CD14-positive monocyte (primary cell): ENCODE measurements at regions of chr1 and their contacts with region 1.

Region 1: DNA sequence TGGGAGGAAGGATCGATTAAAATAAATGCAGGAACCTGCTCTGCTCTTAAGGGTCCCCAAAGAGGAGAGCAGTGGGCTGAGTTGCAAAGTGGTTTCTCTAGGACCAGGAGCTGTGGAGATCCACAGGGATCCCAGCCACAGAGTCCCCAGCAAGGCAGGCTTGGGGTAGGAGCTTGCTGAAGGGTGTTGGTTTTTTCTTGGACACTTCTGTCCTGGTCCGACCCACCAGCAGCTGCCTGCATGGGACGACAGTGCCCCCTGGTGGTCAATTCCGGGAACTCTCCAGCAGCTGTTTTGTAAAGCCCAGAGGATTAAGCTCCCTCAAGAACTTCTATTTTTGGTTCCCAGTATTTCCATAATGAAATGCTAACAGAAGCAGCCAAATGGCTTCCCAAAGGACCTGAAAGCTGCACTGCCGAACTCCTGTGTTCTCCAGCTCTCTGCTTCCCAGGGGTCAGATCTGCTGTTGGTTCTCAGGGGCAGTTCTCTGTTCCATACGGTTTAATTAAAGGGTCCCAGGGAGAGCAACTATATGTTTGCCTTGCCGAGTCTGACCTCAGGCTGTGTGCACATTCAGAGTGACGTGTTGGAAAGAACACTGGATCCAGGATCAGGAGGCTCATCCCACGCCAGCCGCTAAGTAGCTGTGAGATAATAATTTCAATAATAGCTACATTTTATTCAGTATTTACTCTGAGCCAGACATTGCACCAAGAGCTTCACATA is 23.2 kb downstream of the NENF start:
- DNase-seq: peak; percentile 70 to 76 (median 74)
- H3K4me3 ChIP-seq: no peak overlapping the region
- H3K4me3 Mint-ChIP-seq: no peak overlapping the region
- H3K27ac ChIP-seq: no peak overlapping the region
- H3K27ac Mint-ChIP-seq: no peak overlapping the region
- H3K4me1 ChIP-seq: no peaks in the 10 kb centered on the region
- H3K4me1 Mint-ChIP-seq: peaks cover 13% of the 10 kb centered on the region
- H3K27me3 ChIP-seq: no peaks in the 10 kb centered on the region
- H3K27me3 Mint-ChIP-seq: peaks cover 3 to 6% (median 4%) of the 10 kb centered on the region in 3 donors
- CTCF ChIP-seq: peak; percentile 95

Region 2: GRCh38 chr1:212070720-212071302 is 385.2 kb before region 1 on chr1:
- intact Hi-C with region 1: loop called (anchors 5 kb)
- DNase-seq: peak in 2 of 3 donors; percentile 33 to 38
- H3K4me3 ChIP-seq: no peak overlapping the region
- H3K4me3 Mint-ChIP-seq: no peak overlapping the region
- H3K27ac ChIP-seq: no peak overlapping the region
- H3K27ac Mint-ChIP-seq: no peak overlapping the region
- H3K4me1 ChIP-seq: no peaks in the 10 kb centered on the region
- H3K4me1 Mint-ChIP-seq: no peaks in the 10 kb centered on the region
- H3K27me3 ChIP-seq: no peaks in the 10 kb centered on the region
- H3K27me3 Mint-ChIP-seq: no peaks in the 10 kb centered on the region
- CTCF ChIP-seq: peak; percentile 75

Region 3: GRCh38 chr1:212368073-212368484 is 87.9 kb before region 1 on chr1:
- intact Hi-C with region 1: loop called in 1 of 2 experiments (anchors 5 kb)
- DNase-seq: peak; percentile 49 to 69 (median 57)
- H3K4me3 ChIP-seq: no peak overlapping the region
- H3K4me3 Mint-ChIP-seq: no peak overlapping the region
- H3K27ac ChIP-seq: peak overlapping the region in 1 of 2 donors; percentile 60
- H3K27ac Mint-ChIP-seq: peak overlapping the region in 1 of 7 donors; percentile 33
- H3K4me1 ChIP-seq: no peaks in the 10 kb centered on the region
- H3K4me1 Mint-ChIP-seq: no peaks in the 10 kb centered on the region
- H3K27me3 ChIP-seq: no peaks in the 10 kb centered on the region
- H3K27me3 Mint-ChIP-seq: no peaks in the 10 kb centered on the region
- CTCF ChIP-seq: peak; percentile 83

Region 4: GRCh38 chr1:212381397-212382035 is 74.5 kb before region 1 on chr1:
- intact Hi-C with region 1: no loop called
- DNase-seq: no peak
- H3K4me3 ChIP-seq: no peak overlapping the region
- H3K4me3 Mint-ChIP-seq: no peak overlapping the region
- H3K27ac ChIP-seq: no peak overlapping the region
- H3K27ac Mint-ChIP-seq: peak overlapping the region in 3 of 7 donors; percentile 61 to 89 (median 83)
- H3K4me1 ChIP-seq: no peaks in the 10 kb centered on the region
- H3K4me1 Mint-ChIP-seq: peaks cover 12% of the 10 kb centered on the region
- H3K27me3 ChIP-seq: no peaks in the 10 kb centered on the region
- H3K27me3 Mint-ChIP-seq: no peaks in the 10 kb centered on the region
- CTCF ChIP-seq: no peak

Region 5: GRCh38 chr1:212414328-212415106 is 41.4 kb before region 1 on chr1 and contains the start of gene PACC1:
- intact Hi-C with region 1: no loop called
- DNase-seq: peak; percentile 97 to 99 (median 98)
- H3K4me3 ChIP-seq: peak within 1 kb of the TSS; percentile 75 to 83 (median 79)
- H3K4me3 Mint-ChIP-seq: peak within 1 kb of the TSS; percentile 91 to 99
- H3K27ac ChIP-seq: peak within 1 kb of the TSS; percentile 54 to 82
- H3K27ac Mint-ChIP-seq: peak within 1 kb of the TSS; percentile 82 to 95 (median 92)
- H3K4me1 ChIP-seq: peaks cover 50 to 54% of the 10 kb centered on the region in 2 donors
- H3K4me1 Mint-ChIP-seq: peaks cover 58% of the 10 kb centered on the region
- H3K27me3 ChIP-seq: no peaks in the 10 kb centered on the region
- H3K27me3 Mint-ChIP-seq: peaks cover 0 to 2% (median 0%) of the 10 kb centered on the region in 3 donors
- CTCF ChIP-seq: no peak
- polyA plus RNA-seq, gene PACC1: 14.0 to 16.6 (median 14.7) TPM

Region 6: DNA sequence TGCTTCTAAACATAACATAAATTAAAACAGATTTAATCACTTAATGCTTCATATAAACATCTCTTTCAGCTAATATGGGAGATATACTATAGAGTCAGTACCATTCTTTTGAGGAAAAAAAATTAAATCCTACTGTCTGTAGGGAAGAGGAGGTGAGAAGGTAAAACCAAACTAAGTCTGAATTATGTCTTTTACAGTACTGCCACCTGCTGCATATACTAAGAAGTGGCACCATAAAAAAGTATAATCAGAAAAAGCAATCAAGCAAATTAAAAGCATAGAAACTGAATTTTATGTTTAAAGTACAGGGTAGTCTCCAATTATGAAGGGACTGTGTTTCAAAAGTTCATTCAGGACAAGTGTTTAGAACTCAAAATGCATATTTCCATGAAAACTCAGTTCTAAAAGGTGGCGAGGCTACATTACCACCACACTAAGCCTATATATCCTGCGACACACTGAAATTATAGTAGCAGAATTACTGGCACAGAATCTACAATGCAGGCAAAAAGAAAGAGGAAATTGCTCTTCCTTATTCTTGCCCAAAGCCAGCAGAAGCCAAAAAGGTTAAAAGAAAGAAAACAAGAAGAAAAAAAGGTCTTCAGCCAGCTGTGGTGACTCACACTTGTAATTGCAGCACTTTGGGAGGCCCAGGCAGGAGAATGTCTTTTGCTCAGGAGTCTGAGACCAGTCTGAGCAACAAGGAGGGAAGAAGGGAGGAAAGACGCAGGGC is 326.6 kb after region 1 on chr1:
- intact Hi-C with region 1: loop called (anchors 5 to 10 kb)
- DNase-seq: peak; percentile 40 to 86 (median 64)
- H3K4me3 ChIP-seq: no peak overlapping the region
- H3K4me3 Mint-ChIP-seq: no peak overlapping the region
- H3K27ac ChIP-seq: peak overlapping the region; percentile 33 to 59
- H3K27ac Mint-ChIP-seq: peak overlapping the region; percentile 68 to 92 (median 87)
- H3K4me1 ChIP-seq: peaks cover 8 to 17% of the 10 kb centered on the region in 2 donors
- H3K4me1 Mint-ChIP-seq: peaks cover 13% of the 10 kb centered on the region
- H3K27me3 ChIP-seq: no peaks in the 10 kb centered on the region
- H3K27me3 Mint-ChIP-seq: peaks cover 0 to 2% (median 0%) of the 10 kb centered on the region in 3 donors
- CTCF ChIP-seq: peak; percentile 91

Region 7: DNA sequence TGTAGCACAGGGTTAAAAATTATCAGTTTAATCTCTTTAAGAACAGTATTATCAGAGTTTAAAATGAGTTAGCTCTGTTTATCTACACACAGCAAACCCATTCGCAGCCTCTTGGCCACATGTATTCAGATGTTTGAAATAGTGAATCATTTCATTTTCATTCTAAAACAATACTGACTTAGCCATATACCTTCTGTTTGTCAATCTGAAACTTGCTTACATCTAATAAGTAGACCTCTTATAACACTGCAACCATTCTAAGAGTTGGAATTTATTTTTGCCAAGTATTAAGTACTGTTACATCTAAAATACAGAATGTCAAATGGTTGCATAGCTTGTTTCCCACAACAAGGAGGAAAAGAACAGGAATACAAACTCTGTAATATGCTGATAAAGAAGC is 534.3 kb after region 1 on chr1:
- intact Hi-C with region 1: loop called (anchors 10 kb)
- DNase-seq: no peak
- H3K4me3 ChIP-seq: no peak overlapping the region
- H3K4me3 Mint-ChIP-seq: no peak overlapping the region
- H3K27ac ChIP-seq: no peak overlapping the region
- H3K27ac Mint-ChIP-seq: no peak overlapping the region
- H3K4me1 ChIP-seq: no peaks in the 10 kb centered on the region
- H3K4me1 Mint-ChIP-seq: no peaks in the 10 kb centered on the region
- H3K27me3 ChIP-seq: no peaks in the 10 kb centered on the region
- H3K27me3 Mint-ChIP-seq: no peaks in the 10 kb centered on the region
- CTCF ChIP-seq: no peak